ENCODE measurements at regions of chr19 and their contacts with region 1.

Region 1: GRCh38 chr19:16111160-16111908 is at the start of gene RAB8A:
- DNase-seq: peak; percentile 98 to 100 (median 99)
- ATAC-seq: peak; percentile 87
- H3K4me3 ChIP-seq: peak within 1 kb of the TSS; percentile 98 to 100
- H3K4me3 Mint-ChIP-seq: peak within 1 kb of the TSS; percentile 97
- H3K27ac ChIP-seq: peak within 1 kb of the TSS; percentile 93 to 98
- H3K27ac Mint-ChIP-seq: peak within 1 kb of the TSS; percentile 98
- H3K4me1 ChIP-seq: peaks cover 41% of the 10 kb centered on the region
- H3K4me1 Mint-ChIP-seq: peaks cover 39% of the 10 kb centered on the region
- H3K27me3 ChIP-seq: no peaks in the 10 kb centered on the region
- H3K27me3 Mint-ChIP-seq: no peaks in the 10 kb centered on the region
- CTCF ChIP-seq: peak; percentile 84
- total RNA-seq, gene RAB8A: 79.1 to 88.4 TPM

Region 2: GRCh38 chr19:15584541-15585115 is 526.7 kb before region 1 on chr19:
- CTCF ChIA-PET with region 1: no interaction called
- POLR2A ChIA-PET with region 1: no interaction called
- intact Hi-C with region 1: loop called in 1 of 2 experiments (anchors 5 kb)
- DNase-seq: peak; percentile 72 to 90 (median 82)
- ATAC-seq: peak; percentile 97
- H3K4me3 ChIP-seq: peak overlapping the region; percentile 12 to 48
- H3K4me3 Mint-ChIP-seq: peak overlapping the region; percentile 42
- H3K27ac ChIP-seq: no peak overlapping the region
- H3K27ac Mint-ChIP-seq: no peak overlapping the region
- H3K4me1 ChIP-seq: no peaks in the 10 kb centered on the region
- H3K4me1 Mint-ChIP-seq: no peaks in the 10 kb centered on the region
- H3K27me3 ChIP-seq: peaks cover 4 to 8% of the 10 kb centered on the region in 2 experiments
- H3K27me3 Mint-ChIP-seq: peaks cover 19% of the 10 kb centered on the region
- CTCF ChIP-seq: peak; percentile 77

Region 3: DNA sequence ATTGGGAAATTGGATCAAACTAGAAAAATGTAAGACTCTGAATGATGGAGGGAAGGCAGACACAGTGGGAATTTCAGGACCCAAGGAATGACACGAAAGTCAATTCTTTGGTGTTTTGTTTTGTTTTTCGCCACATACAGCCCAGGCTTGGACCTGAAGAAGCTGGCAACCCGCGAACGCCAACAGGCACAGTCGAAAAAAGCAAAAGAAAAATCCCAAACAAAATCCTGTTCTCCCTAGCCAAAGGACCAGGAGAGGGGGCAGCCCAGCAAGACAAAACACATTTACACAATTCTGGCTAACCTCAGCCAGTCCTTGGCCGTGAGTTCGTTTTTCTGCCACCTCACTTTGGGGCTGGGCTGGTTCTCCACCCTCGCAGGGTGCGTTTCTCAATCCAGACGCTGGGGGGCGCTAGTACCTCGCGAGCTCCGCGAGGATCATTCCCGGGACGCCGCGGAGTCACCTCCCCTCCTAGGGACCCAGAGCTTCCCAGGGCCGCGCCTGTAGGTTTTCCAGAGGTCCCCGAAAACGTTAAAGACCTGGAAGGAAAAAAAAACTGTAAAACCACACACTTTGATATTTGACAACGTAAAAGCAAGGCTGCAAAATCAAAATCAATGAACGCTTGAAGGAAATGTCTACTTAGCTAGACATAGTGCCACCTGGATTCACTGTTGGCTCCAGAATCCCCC is 69.9 kb before region 1 on chr19:
- CTCF ChIA-PET with region 1: interaction called, 24 read pairs
- POLR2A ChIA-PET with region 1: no interaction called
- intact Hi-C with region 1: loop called (anchors 1 kb)
- DNase-seq: peak; percentile 50 to 86 (median 76)
- ATAC-seq: peak; percentile 91
- H3K4me3 ChIP-seq: no peak overlapping the region
- H3K4me3 Mint-ChIP-seq: peak overlapping the region; percentile 11
- H3K27ac ChIP-seq: no peak overlapping the region
- H3K27ac Mint-ChIP-seq: no peak overlapping the region
- H3K4me1 ChIP-seq: peaks cover 8% of the 10 kb centered on the region
- H3K4me1 Mint-ChIP-seq: peaks cover 16% of the 10 kb centered on the region
- H3K27me3 ChIP-seq: no peaks in the 10 kb centered on the region
- H3K27me3 Mint-ChIP-seq: no peaks in the 10 kb centered on the region
- CTCF ChIP-seq: peak; percentile 96

Region 4: DNA sequence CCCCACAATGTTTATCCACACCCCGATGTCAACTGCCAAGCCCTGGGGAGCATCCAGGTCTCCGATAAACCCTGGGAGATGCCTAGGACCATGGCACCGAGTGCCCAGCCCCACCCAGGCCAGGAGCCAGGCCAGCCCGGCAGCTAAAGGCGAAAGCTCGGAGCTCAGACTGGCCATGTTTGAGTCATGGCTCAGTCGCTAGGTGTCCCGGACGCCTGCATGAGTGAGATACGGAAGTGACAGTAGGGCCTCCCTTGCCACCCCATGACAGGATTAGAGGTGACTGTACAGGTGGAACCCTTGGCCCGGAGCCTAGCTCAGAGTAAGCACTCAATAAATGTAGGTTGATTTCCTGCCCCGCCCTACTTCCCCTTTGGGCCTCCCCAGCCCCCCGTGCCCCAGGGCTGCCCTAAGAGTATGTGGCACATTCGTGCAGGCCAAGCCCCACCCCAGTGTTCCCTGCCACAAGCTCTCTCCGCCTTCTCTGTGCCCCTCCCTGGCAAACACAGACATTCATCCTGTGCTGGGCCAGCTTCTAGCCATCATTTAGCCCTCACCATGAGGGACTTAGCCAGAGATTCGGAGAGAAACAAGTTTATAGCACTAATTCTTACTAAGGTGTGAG is 40.9 kb before region 1 on chr19:
- CTCF ChIA-PET with region 1: interaction called, 10 read pairs
- POLR2A ChIA-PET with region 1: interaction called, 15 read pairs
- intact Hi-C with region 1: loop called (anchors 1 kb)
- DNase-seq: peak; percentile 67 to 96 (median 88)
- ATAC-seq: peak; percentile 91
- H3K4me3 ChIP-seq: peak overlapping the region; percentile 38 to 47
- H3K4me3 Mint-ChIP-seq: peak overlapping the region; percentile 78
- H3K27ac ChIP-seq: peak overlapping the region; percentile 82 to 97
- H3K27ac Mint-ChIP-seq: no peak overlapping the region
- H3K4me1 ChIP-seq: peaks cover 63% of the 10 kb centered on the region
- H3K4me1 Mint-ChIP-seq: peaks cover 40% of the 10 kb centered on the region
- H3K27me3 ChIP-seq: no peaks in the 10 kb centered on the region
- H3K27me3 Mint-ChIP-seq: no peaks in the 10 kb centered on the region
- CTCF ChIP-seq: peak; percentile 38

Region 5: DNA sequence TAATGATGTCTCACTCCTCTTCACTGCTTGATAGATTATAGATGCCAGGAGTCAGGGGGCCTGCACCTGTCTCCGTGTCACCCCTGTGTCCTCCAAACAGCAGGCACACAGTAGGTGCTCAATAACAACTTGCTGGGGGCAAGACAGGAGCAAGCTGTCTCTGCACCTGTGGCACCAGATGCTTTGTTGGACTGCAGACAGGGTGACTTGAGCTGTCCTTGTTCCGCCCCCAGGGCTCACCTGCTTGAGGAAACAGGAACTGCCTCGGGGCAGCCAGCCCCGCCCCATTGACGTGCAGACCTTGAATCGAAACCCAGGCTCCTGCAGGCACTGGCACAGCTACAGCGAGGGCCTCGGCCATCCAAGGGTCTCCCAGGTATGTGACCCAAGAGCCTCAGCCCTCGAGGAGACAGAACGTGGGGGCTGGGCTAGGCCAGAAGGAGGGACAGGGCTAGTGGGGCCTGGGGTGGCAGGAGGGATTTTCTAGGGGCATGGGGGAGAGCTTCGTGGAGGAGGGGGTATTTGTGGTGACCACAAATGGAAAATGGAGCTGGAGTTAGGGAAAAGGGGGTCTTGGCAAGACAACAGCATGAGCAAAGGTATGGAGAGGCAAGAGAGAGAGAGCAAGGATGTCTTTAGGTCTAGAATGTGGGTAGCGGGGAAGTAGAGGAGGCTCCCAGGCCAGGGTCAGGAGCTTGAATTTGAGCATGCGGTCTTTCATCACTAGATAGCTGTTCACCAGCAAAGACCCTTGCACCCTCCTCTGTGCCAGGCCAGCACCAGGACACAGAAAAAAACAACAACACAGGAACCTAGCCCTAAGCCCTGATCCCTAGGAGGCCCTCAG is 32.3 kb after region 1 on chr19 and contains the start of gene HSH2D:
- CTCF ChIA-PET with region 1: interaction called, 4 read pairs
- POLR2A ChIA-PET with region 1: no interaction called
- intact Hi-C with region 1: loop called (anchors 1 kb)
- DNase-seq: peak; percentile 65 to 90 (median 85)
- ATAC-seq: peak; percentile 99
- H3K4me3 ChIP-seq: peak within 1 kb of the TSS; percentile 63 to 70
- H3K4me3 Mint-ChIP-seq: peak within 1 kb of the TSS; percentile 96
- H3K27ac ChIP-seq: peak within 1 kb of the TSS; percentile 69 to 76
- H3K27ac Mint-ChIP-seq: peak within 1 kb of the TSS; percentile 97
- H3K4me1 ChIP-seq: peaks cover 29% of the 10 kb centered on the region
- H3K4me1 Mint-ChIP-seq: peaks cover 37% of the 10 kb centered on the region
- H3K27me3 ChIP-seq: no peaks in the 10 kb centered on the region
- H3K27me3 Mint-ChIP-seq: no peaks in the 10 kb centered on the region
- CTCF ChIP-seq: no peak
- total RNA-seq, gene HSH2D: 35.9 to 37.5 TPM

Region 6: DNA sequence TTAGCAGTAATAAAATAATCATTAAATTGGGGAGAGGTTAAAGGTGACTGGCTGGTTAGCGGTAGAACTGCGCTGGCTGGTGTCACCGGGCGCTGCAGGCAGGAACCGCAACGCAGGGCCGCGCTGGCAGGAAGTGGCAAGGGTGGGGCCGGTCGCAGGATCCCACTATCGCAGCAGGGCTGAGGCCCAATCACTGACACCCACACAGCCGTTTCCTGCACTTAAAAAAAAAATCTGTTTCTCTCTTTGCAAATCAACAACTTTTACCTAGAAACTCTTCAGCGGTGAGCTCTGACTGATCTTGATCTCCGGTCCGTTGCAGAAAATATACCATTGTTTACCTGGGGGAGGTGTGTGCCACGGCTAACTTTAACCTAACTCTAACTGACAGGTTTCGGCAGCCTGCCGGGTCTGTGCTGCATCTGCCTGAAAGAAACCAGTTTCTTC is 260.2 kb after region 1 on chr19:
- CTCF ChIA-PET with region 1: no interaction called
- POLR2A ChIA-PET with region 1: no interaction called
- intact Hi-C with region 1: loop called in 1 of 2 experiments (anchors 1 kb)
- DNase-seq: peak; percentile 87 to 97 (median 92)
- ATAC-seq: peak; percentile 41
- H3K4me3 ChIP-seq: peak overlapping the region; percentile 33 to 44
- H3K4me3 Mint-ChIP-seq: no peak overlapping the region
- H3K27ac ChIP-seq: peak overlapping the region; percentile 91 to 95
- H3K27ac Mint-ChIP-seq: no peak overlapping the region
- H3K4me1 ChIP-seq: peaks cover 95% of the 10 kb centered on the region
- H3K4me1 Mint-ChIP-seq: peaks cover 68% of the 10 kb centered on the region
- H3K27me3 ChIP-seq: no peaks in the 10 kb centered on the region
- H3K27me3 Mint-ChIP-seq: no peaks in the 10 kb centered on the region
- CTCF ChIP-seq: no peak

Region 7: DNA sequence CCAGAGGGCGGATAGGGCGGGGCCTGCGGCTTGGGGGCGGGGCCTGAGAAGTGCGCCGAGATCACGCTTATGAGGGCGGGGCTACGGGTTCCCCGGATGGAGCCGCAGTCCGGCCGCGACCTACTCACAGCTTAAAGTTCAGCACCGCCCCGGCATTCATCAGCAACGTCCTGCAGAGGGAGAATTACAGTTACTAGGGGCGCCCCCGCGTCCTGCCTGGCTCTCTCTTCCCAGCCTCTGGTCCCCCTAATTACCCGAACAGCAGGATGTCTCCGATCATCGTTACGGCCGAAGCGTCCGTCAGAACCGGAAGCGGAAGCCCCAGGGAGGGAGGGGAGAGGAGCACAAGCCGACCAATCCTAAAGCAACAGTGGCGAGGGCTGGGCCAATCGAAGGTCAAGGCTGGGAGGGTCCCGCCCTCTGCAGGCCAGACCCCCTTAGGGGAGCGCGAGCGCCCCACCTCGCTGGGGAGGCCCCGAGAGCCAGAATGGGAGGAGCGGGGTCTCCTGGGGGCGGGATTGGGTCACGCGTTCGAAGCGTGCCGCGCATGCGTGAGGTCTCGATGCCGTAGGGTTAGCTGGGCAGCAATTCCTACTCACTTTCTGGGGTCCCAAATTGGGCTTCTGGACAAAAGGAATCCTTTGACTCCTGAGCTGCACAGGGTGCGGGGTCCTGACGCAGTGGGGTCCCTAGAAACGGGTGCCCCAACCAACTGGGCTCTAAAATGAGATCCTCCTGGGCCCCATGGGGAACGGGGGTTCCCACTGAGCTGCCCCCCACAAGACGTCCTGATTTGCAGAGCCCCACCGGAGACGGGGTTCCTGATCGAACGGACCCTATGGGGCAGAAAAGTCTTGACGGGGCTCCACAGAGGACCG is 548.7 kb after region 1 on chr19 and contains the start of gene SMIM7:
- CTCF ChIA-PET with region 1: no interaction called
- POLR2A ChIA-PET with region 1: no interaction called
- intact Hi-C with region 1: loop called in 1 of 2 experiments (anchors 1 kb)
- DNase-seq: peak; percentile 97 to 100 (median 99)
- ATAC-seq: peak; percentile 96
- H3K4me3 ChIP-seq: peak within 1 kb of the TSS; percentile 83 to 95
- H3K4me3 Mint-ChIP-seq: peak within 1 kb of the TSS; percentile 100
- H3K27ac ChIP-seq: peak within 1 kb of the TSS; percentile 89 to 90
- H3K27ac Mint-ChIP-seq: peak within 1 kb of the TSS; percentile 99
- H3K4me1 ChIP-seq: peaks cover 39% of the 10 kb centered on the region
- H3K4me1 Mint-ChIP-seq: peaks cover 45% of the 10 kb centered on the region
- H3K27me3 ChIP-seq: no peaks in the 10 kb centered on the region
- H3K27me3 Mint-ChIP-seq: no peaks in the 10 kb centered on the region
- CTCF ChIP-seq: no peak
- total RNA-seq, gene SMIM7: 47.6 to 48.2 TPM

Measured in CD8-positive, alpha-beta T cell (primary cell).